Activated B cell treated with CpG ODN at 0.5 μM for 24 hours (primary cell): ENCODE measurements at regions of chr2 and their contacts with region 1.

Region 1: GRCh38 chr2:195559431-195559914 is 97.6 kb upstream of the SLC39A10 start:
- DNase-seq: no peak
- ATAC-seq: peak; percentile 70
- H3K4me3 Mint-ChIP-seq: peak overlapping the region; percentile 32
- H3K27ac Mint-ChIP-seq: peak overlapping the region; percentile 98
- H3K4me1 Mint-ChIP-seq: peaks cover 62% of the 10 kb centered on the region
- H3K27me3 Mint-ChIP-seq: no peaks in the 10 kb centered on the region
- CTCF ChIP-seq: no peak

Region 2: DNA sequence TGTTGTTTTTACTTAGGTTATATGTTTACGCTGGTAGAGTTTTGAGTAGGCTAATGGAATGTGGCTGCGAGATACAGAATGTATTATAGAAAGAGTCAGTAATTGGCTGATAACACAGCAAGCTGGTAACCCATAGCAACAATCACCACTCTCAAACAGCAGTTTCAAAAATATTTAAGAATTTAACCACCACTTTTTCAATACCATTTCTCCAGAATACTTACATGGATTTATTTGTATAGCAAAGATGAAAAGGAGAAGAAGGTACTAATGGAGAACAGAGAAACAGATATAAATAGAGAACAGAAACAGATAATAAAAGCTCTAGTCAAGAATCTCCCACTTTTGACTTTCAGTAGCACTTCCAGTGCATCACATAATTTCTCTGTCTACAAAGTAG is 90.7 kb before region 1 on chr2:
- CTCF ChIA-PET with region 1: no interaction called
- POLR2A ChIA-PET with region 1: no interaction called
- intact Hi-C with region 1: no loop called
- DNase-seq: no peak
- ATAC-seq: no peak
- H3K4me3 Mint-ChIP-seq: no peak overlapping the region
- H3K27ac Mint-ChIP-seq: no peak overlapping the region
- H3K4me1 Mint-ChIP-seq: peaks cover 4% of the 10 kb centered on the region
- H3K27me3 Mint-ChIP-seq: no peaks in the 10 kb centered on the region
- CTCF ChIP-seq: no peak

Region 3: GRCh38 chr2:195498176-195498575 is 61.3 kb before region 1 on chr2:
- CTCF ChIA-PET with region 1: interaction called, 16 read pairs
- POLR2A ChIA-PET with region 1: interaction called, 4 read pairs
- intact Hi-C with region 1: loop called (anchors 1 kb)
- DNase-seq: peak; percentile 22
- ATAC-seq: peak; percentile 66
- H3K4me3 Mint-ChIP-seq: no peak overlapping the region
- H3K27ac Mint-ChIP-seq: no peak overlapping the region
- H3K4me1 Mint-ChIP-seq: peaks cover 18% of the 10 kb centered on the region
- H3K27me3 Mint-ChIP-seq: no peaks in the 10 kb centered on the region
- CTCF ChIP-seq: no peak

Region 4: DNA sequence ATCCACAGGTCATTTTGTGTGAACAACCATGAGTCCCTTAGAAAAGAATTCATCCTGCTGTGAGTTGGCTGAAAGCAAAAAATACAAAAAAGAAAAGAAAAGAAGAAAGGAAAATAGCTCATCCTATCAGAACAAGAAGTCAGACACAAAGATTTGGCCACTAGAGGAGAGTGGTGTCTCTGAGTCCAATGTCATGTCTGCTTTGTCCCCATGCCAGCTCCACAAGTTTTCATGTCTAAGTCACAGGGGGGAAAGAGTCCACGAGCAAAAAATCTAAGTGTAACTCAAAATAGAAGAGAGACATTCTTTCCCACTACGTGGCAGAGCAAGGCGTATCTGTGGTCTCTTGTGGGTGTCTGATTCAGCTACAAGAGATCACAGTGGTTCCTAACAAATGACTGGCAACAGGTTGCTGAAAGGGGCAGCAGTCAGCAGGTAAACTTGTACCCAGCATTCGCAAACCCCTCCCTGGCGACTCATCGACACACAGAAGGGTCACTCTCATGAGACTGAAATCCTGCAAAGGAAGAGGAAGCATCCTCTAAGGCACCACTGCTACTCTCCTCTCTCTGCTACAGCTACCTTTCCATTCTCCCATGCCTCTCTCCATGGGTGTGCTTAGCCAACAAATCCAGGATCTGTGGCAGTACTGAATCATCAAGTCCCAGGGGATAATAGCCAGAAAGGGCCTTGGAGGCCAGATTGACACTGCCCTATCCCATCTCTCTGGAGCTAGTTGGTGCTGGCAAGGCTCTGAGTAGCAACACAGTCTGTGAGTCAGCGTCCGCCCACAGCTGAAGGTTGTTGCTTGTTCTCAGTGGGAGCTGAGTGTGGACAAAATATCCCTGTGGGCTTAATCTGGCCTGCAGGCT is 25.5 kb before region 1 on chr2:
- CTCF ChIA-PET with region 1: interaction called, 26 read pairs
- POLR2A ChIA-PET with region 1: interaction called, 126 read pairs
- intact Hi-C with region 1: loop called (anchors 1 kb)
- DNase-seq: peak; percentile 28
- ATAC-seq: peak; percentile 73
- H3K4me3 Mint-ChIP-seq: peak overlapping the region; percentile 66
- H3K27ac Mint-ChIP-seq: peak overlapping the region; percentile 97
- H3K4me1 Mint-ChIP-seq: peaks cover 72% of the 10 kb centered on the region
- H3K27me3 Mint-ChIP-seq: no peaks in the 10 kb centered on the region
- CTCF ChIP-seq: no peak

Region 5: DNA sequence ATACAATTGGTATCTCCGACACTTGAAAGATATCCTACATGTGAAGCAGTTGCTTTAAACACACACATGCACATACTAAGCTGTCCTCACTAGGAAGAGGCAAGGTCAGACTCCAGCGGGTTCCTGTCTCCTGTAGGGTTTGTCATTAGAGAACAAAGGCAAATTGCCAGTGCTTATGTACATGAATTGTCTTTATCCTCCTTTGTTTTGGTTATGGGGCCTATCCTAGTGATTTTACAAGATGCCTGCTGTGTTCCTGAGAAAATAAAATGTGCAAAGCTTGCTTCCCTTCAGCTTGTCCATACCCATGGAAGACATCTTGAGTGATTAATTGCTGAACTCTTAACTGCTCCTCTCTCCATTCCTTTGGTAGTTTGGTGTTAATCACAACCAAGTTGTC is 10.9 kb after region 1 on chr2:
- CTCF ChIA-PET with region 1: interaction called, 3 read pairs
- POLR2A ChIA-PET with region 1: interaction called, 12 read pairs
- intact Hi-C with region 1: loop called (anchors 1 kb)
- DNase-seq: no peak
- ATAC-seq: no peak
- H3K4me3 Mint-ChIP-seq: no peak overlapping the region
- H3K27ac Mint-ChIP-seq: peak overlapping the region; percentile 41
- H3K4me1 Mint-ChIP-seq: peaks cover 27% of the 10 kb centered on the region
- H3K27me3 Mint-ChIP-seq: no peaks in the 10 kb centered on the region
- CTCF ChIP-seq: no peak

Region 6: GRCh38 chr2:195594248-195594647 is 34.8 kb after region 1 on chr2:
- CTCF ChIA-PET with region 1: no interaction called
- POLR2A ChIA-PET with region 1: interaction called, 18 read pairs
- intact Hi-C with region 1: no loop called
- DNase-seq: no peak
- ATAC-seq: no peak
- H3K4me3 Mint-ChIP-seq: no peak overlapping the region
- H3K27ac Mint-ChIP-seq: peak overlapping the region; percentile 9
- H3K4me1 Mint-ChIP-seq: peaks cover 29% of the 10 kb centered on the region
- H3K27me3 Mint-ChIP-seq: no peaks in the 10 kb centered on the region
- CTCF ChIP-seq: no peak

Region 7: DNA sequence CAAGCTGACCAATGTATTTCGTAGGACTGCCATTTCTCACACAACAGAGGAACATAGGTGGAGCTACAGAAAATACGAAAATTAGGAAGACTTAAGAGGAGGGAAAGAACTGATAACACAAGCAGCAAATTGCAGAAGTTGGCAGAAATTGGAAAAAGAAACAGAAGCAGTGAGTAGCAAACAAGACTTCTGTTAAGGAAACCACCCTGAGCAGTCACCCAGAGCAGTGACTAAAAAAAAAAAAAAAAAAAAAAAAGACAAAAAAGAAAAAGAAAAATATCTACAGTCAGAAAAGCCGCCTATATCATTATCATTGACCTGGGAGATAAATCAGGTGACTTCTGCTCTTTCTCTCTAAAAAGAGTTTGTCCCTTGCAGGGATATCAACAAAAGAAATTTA is 590.5 kb after region 1 on chr2:
- CTCF ChIA-PET with region 1: no interaction called
- POLR2A ChIA-PET with region 1: no interaction called
- intact Hi-C with region 1: loop called (anchors 5 kb)
- DNase-seq: no peak
- ATAC-seq: peak; percentile 71
- H3K4me3 Mint-ChIP-seq: peak overlapping the region; percentile 70
- H3K27ac Mint-ChIP-seq: peak overlapping the region; percentile 93
- H3K4me1 Mint-ChIP-seq: peaks cover 78% of the 10 kb centered on the region
- H3K27me3 Mint-ChIP-seq: no peaks in the 10 kb centered on the region
- CTCF ChIP-seq: no peak